Activated T-helper 1 cell treated with anti-CD3 and anti-CD28 coated beads, Interleukin-12 subunit alpha, Interleukin-12 subunit beta, Interleukin-2, Interleukin-4 antibody, amounts not matched to agents 30 ng/mL and 10 ng/mL and 1 ng/mL, durations not matched to agents 14 hours and 24 hours and 36 hours (primary cell): ENCODE measurements at regions of chr11 and their contacts with region 1.

Region 1: DNA sequence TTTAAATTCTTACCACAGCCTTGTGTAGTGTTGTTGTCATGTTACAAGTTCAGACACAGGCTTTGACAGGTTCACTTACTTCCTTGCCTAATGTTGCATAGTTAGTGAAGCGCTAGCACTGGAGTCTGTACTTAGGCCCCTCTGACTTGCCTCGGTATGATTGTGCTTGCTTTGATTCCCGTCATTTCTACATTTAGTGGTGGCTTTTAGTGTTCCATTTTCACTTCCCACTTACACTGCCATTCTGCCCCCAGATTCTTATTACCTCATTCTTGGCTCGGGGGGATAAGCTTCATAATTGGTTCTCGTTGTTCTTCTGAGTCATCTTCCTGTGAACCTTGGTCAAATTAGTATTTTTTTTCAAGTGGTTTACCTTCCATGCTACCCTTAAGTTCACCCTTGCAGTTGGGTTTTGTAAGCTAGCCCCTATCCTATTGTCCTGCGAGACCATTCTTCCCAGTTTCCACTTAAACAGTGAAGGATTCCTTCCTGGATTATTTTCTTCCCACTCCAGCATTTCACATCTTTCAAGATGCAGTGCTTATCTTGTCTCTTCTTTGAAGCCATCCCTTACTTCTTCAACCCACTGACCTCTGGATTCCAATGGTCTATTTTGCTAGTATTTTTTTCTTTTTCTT is 68.7 kb downstream of the DDX10 start:
- DNase-seq: peak; percentile 25
- H3K4me3 Mint-ChIP-seq: peak overlapping the region; percentile 55
- H3K27ac Mint-ChIP-seq: peak overlapping the region; percentile 88
- H3K4me1 Mint-ChIP-seq: peaks cover 44% of the 10 kb centered on the region
- H3K27me3 Mint-ChIP-seq: no peaks in the 10 kb centered on the region

Region 2: GRCh38 chr11:108237058-108237481 is 496.5 kb before region 1 on chr11:
- intact Hi-C with region 1: loop called (anchors 1 kb)
- DNase-seq: no peak
- H3K4me3 Mint-ChIP-seq: peak overlapping the region; percentile 68
- H3K27ac Mint-ChIP-seq: peak overlapping the region; percentile 78
- H3K4me1 Mint-ChIP-seq: peaks cover 60% of the 10 kb centered on the region
- H3K27me3 Mint-ChIP-seq: peaks cover 4% of the 10 kb centered on the region

Region 3: GRCh38 chr11:108697872-108698473 is 35.6 kb before region 1 on chr11:
- intact Hi-C with region 1: loop called (anchors 1 kb)
- DNase-seq: peak; percentile 5
- H3K4me3 Mint-ChIP-seq: no peak overlapping the region
- H3K27ac Mint-ChIP-seq: no peak overlapping the region
- H3K4me1 Mint-ChIP-seq: no peaks in the 10 kb centered on the region
- H3K27me3 Mint-ChIP-seq: no peaks in the 10 kb centered on the region

Region 4: DNA sequence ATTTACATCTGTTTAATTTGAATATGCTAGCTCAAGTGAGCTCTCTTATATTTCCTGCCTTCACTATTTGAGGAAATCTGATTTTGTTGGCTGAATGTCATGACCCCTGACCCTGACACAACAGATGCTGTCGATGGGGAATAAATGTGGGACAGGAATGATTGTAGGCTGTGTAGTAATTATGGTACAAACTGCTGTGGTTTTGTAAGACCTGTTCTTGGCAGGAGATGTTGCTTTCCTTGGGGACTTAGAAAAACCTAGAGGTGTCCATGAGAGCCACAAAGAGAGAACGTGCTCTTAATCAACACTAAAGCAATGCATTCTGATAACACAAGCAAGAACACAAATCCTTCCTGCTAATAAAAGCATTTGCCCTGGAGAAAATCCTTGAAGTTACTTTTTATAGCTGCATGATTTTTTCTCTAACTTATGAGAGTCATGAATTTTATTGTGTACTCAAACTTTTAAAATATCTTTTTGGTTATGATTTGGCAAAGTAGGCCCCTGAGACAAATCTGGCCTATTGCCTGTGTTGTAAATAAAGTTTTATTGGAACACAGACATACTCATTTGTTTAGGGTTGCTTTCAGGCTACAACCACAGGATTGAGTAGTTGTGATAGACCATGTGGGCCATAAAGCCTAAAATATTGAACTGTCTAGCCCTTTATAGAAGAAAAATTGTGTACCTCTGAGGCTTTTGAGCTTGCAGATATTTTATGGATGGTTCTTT is 21.5 kb after region 1 on chr11:
- intact Hi-C with region 1: loop called (anchors 1 kb)
- DNase-seq: no peak
- H3K4me3 Mint-ChIP-seq: no peak overlapping the region
- H3K27ac Mint-ChIP-seq: no peak overlapping the region
- H3K4me1 Mint-ChIP-seq: peaks cover 15% of the 10 kb centered on the region
- H3K27me3 Mint-ChIP-seq: no peaks in the 10 kb centered on the region

Region 5: GRCh38 chr11:108853864-108854263 is 120.3 kb after region 1 on chr11:
- intact Hi-C with region 1: loop called (anchors 2 kb)
- DNase-seq: no peak
- H3K4me3 Mint-ChIP-seq: peak overlapping the region; percentile 75
- H3K27ac Mint-ChIP-seq: peak overlapping the region; percentile 75
- H3K4me1 Mint-ChIP-seq: peaks cover 19% of the 10 kb centered on the region
- H3K27me3 Mint-ChIP-seq: no peaks in the 10 kb centered on the region

Region 6: GRCh38 chr11:110092515-110093404 is 1359.2 kb after region 1 on chr11 and contains the start of gene ZC3H12C:
- intact Hi-C with region 1: loop called (anchors 10 kb)
- DNase-seq: peak; percentile 47
- H3K4me3 Mint-ChIP-seq: peak within 1 kb of the TSS; percentile 87
- H3K27ac Mint-ChIP-seq: peak within 1 kb of the TSS; percentile 93
- H3K4me1 Mint-ChIP-seq: peaks cover 16% of the 10 kb centered on the region
- H3K27me3 Mint-ChIP-seq: peaks cover 56% of the 10 kb centered on the region
- total RNA-seq, gene ZC3H12C: 5.7 and 6.2 TPM in 2 replicates